Activated CD4-positive, alpha-beta T cell treated with anti-CD3 and anti-CD28 coated beads for 36 hours (primary cell): ENCODE measurements at regions of chr4 and their contacts with region 1.

Region 1: DNA sequence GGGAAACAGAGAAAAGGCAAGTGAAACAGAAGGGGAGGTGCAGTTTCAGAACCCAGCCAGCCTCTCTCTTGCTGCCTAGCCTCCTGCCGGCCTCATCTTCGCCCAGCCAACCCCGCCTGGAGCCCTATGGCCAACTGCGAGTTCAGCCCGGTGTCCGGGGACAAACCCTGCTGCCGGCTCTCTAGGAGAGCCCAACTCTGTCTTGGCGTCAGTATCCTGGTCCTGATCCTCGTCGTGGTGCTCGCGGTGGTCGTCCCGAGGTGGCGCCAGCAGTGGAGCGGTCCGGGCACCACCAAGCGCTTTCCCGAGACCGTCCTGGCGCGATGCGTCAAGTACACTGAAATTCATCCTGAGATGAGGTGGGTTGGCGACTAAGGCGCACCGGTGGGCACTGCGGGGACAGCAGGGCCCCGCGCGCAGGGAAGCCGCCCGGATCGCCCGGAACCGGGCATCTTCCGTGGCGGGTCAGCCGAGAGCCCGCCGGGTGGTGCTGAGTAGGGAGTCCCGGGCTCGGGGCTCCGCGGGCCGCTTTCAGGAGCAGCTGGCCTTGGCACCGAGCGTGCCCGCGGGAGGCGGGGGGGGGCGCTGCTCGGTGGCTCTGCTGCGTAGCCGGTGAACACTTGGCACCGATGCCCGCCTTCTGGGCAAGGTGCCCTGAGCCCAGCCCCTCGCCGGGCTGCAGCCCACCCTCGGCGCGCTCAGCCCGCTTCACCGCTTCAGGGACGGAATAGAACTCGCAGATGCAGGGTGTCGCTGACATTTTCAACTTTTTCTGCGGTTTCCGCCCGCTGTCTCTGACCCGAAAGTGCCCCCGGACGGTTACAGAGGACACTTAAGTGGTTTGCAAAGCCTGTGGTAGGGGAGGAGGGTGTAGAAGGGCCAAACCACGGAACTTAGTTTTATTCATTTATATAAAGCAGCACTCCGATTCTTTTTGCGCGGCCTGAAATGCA is at the start of gene CD38:
- DNase-seq: peak; percentile 76
- ATAC-seq: peak; percentile 76
- H3K4me3 Mint-ChIP-seq: peak within 1 kb of the TSS; percentile 84
- H3K27ac Mint-ChIP-seq: peak within 1 kb of the TSS; percentile 86
- H3K4me1 Mint-ChIP-seq: peaks cover 70% of the 10 kb centered on the region
- H3K27me3 Mint-ChIP-seq: peaks cover 30% of the 10 kb centered on the region
- total RNA-seq, gene CD38: 15.0 to 17.3 TPM

Region 2: GRCh38 chr4:14856076-14856933 is 922.3 kb before region 1 on chr4:
- CTCF ChIA-PET with region 1: no interaction called
- POLR2A ChIA-PET with region 1: no interaction called
- intact Hi-C with region 1: loop called in 1 of 2 experiments (anchors 10 kb)
- DNase-seq: peak; percentile 86
- ATAC-seq: peak; percentile 94
- H3K4me3 Mint-ChIP-seq: peak overlapping the region; percentile 3
- H3K27ac Mint-ChIP-seq: peak overlapping the region; percentile 89
- H3K4me1 Mint-ChIP-seq: peaks cover 28% of the 10 kb centered on the region
- H3K27me3 Mint-ChIP-seq: peaks cover 19% of the 10 kb centered on the region

Region 3: DNA sequence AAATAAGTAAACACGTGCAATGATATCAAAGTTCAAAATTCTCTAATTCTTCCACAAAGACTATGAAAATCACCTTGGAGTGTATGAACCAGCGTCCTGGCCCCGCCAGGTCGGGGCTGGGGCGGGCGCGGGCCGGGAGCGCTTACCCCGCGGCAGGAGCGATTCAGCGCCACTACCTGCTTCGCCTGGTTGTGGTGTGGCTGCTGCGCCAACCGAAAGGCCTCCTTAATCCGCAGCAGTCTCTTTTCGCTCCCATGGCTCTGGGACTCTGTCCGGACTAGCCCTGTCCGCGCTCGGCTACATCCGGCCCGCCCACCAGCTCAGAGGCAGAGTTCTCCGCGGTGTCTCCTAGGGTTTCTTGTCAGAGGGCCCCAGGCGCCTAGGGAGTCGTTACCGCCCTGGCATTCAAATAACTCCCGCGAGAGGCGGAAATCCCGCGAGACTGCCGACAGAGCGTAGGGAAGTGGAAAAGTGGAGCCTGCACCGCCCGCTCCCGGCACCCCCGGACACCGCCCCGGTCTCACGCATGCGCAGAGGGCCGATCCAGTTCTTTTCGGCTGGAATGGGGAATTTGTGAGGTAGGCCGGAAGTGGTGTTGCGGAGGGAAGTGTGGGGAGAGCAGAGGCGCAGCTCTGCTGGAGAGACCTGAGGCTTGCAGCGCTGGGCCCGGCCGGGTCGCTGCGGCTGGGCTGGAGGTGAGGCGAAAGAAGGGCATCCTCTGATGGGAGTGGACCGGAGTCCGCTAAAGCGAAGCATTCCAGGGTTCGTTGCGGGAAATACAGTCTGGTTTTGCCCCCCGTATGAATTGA is 97.2 kb before region 1 on chr4 and contains the start of gene FAM200B:
- CTCF ChIA-PET with region 1: no interaction called
- POLR2A ChIA-PET with region 1: interaction called, 6 read pairs
- intact Hi-C with region 1: loop called (anchors 2 to 5 kb)
- DNase-seq: peak; percentile 99
- ATAC-seq: peak; percentile 98
- H3K4me3 Mint-ChIP-seq: peak within 1 kb of the TSS; percentile 98
- H3K27ac Mint-ChIP-seq: peak within 1 kb of the TSS; percentile 96
- H3K4me1 Mint-ChIP-seq: peaks cover 39% of the 10 kb centered on the region
- H3K27me3 Mint-ChIP-seq: no peaks in the 10 kb centered on the region
- total RNA-seq, gene FAM200B: 9.8 to 13.3 TPM

Region 4: GRCh38 chr4:15729910-15730533 is 48.5 kb before region 1 on chr4:
- CTCF ChIA-PET with region 1: interaction called, 3 read pairs
- POLR2A ChIA-PET with region 1: no interaction called
- intact Hi-C with region 1: loop called in 1 of 2 experiments (anchors 1 kb)
- DNase-seq: peak; percentile 19
- ATAC-seq: peak; percentile 65
- H3K4me3 Mint-ChIP-seq: no peak overlapping the region
- H3K27ac Mint-ChIP-seq: no peak overlapping the region
- H3K4me1 Mint-ChIP-seq: peaks cover 7% of the 10 kb centered on the region
- H3K27me3 Mint-ChIP-seq: no peaks in the 10 kb centered on the region

Region 5: DNA sequence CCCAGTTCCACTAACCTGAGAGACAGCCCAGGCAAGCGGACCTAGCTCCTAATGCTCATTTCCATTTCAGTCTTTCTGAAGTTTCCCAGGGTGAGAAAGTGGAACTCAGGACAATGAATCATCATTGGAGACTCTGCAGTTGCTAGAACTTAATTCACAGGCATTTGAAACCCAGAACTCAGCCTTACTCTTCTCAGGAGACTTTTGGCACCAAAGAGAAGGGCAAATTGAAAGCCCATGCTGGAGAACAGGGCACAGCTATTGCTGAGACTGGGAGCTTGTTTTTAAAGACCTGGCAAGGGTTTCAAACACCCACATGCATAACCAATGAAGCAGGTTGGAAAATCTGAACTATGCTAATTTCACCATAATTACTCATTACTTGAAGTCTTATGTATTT is 39.7 kb before region 1 on chr4:
- CTCF ChIA-PET with region 1: interaction called, 7 read pairs
- POLR2A ChIA-PET with region 1: interaction called, 5 read pairs
- intact Hi-C with region 1: loop called in 1 of 2 experiments (anchors 2 kb)
- DNase-seq: peak; percentile 16
- ATAC-seq: peak; percentile 85
- H3K4me3 Mint-ChIP-seq: no peak overlapping the region
- H3K27ac Mint-ChIP-seq: peak overlapping the region; percentile 58
- H3K4me1 Mint-ChIP-seq: peaks cover 40% of the 10 kb centered on the region
- H3K27me3 Mint-ChIP-seq: no peaks in the 10 kb centered on the region

Region 6: DNA sequence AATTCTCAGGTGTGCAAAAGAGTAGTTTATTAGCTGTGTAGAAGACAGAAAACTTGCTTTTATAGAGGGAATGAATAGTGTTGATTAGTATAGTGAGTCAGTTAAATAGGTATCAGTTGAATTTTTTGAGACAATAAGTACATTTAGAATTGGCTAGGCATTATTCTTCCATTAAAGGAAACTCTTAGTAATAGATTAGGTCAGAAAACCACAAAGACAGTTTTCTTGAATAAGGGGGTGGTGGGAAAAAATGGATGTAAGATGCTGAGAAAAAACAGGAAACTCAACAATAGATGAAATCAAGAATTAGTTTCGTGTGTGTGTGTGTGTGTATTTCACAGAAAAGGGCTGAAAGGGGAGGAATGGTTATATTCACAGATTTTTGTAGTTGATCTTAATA is 16.3 kb after region 1 on chr4:
- CTCF ChIA-PET with region 1: interaction called, 3 read pairs
- POLR2A ChIA-PET with region 1: no interaction called
- intact Hi-C with region 1: loop called (anchors 1 to 2 kb)
- DNase-seq: no peak
- ATAC-seq: peak; percentile 84
- H3K4me3 Mint-ChIP-seq: peak overlapping the region; percentile 47
- H3K27ac Mint-ChIP-seq: peak overlapping the region; percentile 58
- H3K4me1 Mint-ChIP-seq: peaks cover 46% of the 10 kb centered on the region
- H3K27me3 Mint-ChIP-seq: no peaks in the 10 kb centered on the region

Region 7: GRCh38 chr4:16217300-16218051 is 438.9 kb after region 1 on chr4:
- CTCF ChIA-PET with region 1: no interaction called
- POLR2A ChIA-PET with region 1: interaction called, 10 read pairs
- intact Hi-C with region 1: loop called in 1 of 2 experiments (anchors 10 kb)
- DNase-seq: no peak
- ATAC-seq: peak; percentile 90
- H3K4me3 Mint-ChIP-seq: peak overlapping the region; percentile 57
- H3K27ac Mint-ChIP-seq: peak overlapping the region; percentile 80
- H3K4me1 Mint-ChIP-seq: peaks cover 75% of the 10 kb centered on the region
- H3K27me3 Mint-ChIP-seq: no peaks in the 10 kb centered on the region